IMR-90 (cell line): ENCODE measurements at regions of chr1 and their contacts with region 1.

Region 1: DNA sequence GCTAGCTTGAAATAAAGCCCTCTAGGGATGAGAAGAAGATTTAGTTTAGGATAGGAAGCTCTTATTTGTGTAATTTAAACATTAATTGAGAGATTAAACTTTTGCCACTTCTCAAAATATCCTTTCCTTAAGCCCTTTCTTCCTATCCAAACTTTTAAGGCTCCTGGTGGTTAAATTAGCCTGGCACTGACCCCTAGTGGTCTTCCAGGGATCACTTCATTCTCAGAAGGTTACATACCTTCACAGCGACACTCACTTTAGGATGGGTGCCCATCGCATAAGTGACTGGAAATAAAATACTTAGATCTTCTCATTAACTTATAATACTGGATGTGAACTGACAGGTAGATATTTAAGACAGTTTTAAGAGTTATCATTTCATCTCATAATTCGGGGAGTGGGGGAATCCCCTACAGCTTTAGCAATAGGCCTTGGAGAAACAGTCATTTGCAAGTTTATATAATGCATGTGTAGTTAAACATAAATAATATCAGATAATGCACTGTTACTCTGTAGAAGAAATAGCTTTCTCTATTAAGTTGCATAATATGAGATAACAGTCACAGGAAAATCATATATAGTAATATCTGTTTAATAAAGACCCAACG is 7.4 kb downstream of the LHX9 start:
- DNase-seq: peak; percentile 61
- ATAC-seq: peak; percentile 83
- H3K4me3 ChIP-seq: no peak overlapping the region
- H3K27ac ChIP-seq: no peak overlapping the region
- H3K4me1 ChIP-seq: no peaks in the 10 kb centered on the region
- H3K27me3 ChIP-seq: peaks cover 55% of the 10 kb centered on the region
- CTCF ChIP-seq: peak; percentile 76
- POLR2A ChIP-seq: no peak
- RAD21 ChIP-seq: peak; percentile 78

Region 2: GRCh38 chr1:197521118-197521739 is 403.4 kb before region 1 on chr1:
- CTCF ChIA-PET with region 1: interaction called, 4 read pairs
- POLR2A ChIA-PET with region 1: no interaction called
- dilution Hi-C with region 1: no loop called
- in situ Hi-C with region 1: loop called (anchors 5 kb)
- intact Hi-C with region 1: loop called (anchors 5 kb)
- DNase-seq: peak; percentile 44
- ATAC-seq: peak; percentile 66
- H3K4me3 ChIP-seq: no peak overlapping the region
- H3K27ac ChIP-seq: no peak overlapping the region
- H3K4me1 ChIP-seq: no peaks in the 10 kb centered on the region
- H3K27me3 ChIP-seq: no peaks in the 10 kb centered on the region
- CTCF ChIP-seq: peak; percentile 60
- POLR2A ChIP-seq: no peak
- RAD21 ChIP-seq: peak; percentile 43

Region 3: GRCh38 chr1:197614916-197615692 is 309.5 kb before region 1 on chr1:
- CTCF ChIA-PET with region 1: interaction called, 3 read pairs
- POLR2A ChIA-PET with region 1: no interaction called
- dilution Hi-C with region 1: no loop called
- in situ Hi-C with region 1: loop called (anchors 5 kb)
- intact Hi-C with region 1: loop called (anchors 2 kb)
- DNase-seq: peak; percentile 51
- ATAC-seq: peak; percentile 91
- H3K4me3 ChIP-seq: no peak overlapping the region
- H3K27ac ChIP-seq: no peak overlapping the region
- H3K4me1 ChIP-seq: 0 out of 2 replicates have a peak, but pooled peaks cover 2% of the 10 kb centered on the region
- H3K27me3 ChIP-seq: no peaks in the 10 kb centered on the region
- CTCF ChIP-seq: peak; percentile 66
- POLR2A ChIP-seq: no peak
- RAD21 ChIP-seq: peak; percentile 78

Region 4: GRCh38 chr1:197807216-197807615 is 117.4 kb before region 1 on chr1:
- CTCF ChIA-PET with region 1: no interaction called
- POLR2A ChIA-PET with region 1: no interaction called
- dilution Hi-C with region 1: no loop called
- in situ Hi-C with region 1: no loop called
- intact Hi-C with region 1: no loop called
- DNase-seq: no peak
- ATAC-seq: no peak
- H3K4me3 ChIP-seq: no peak overlapping the region
- H3K27ac ChIP-seq: no peak overlapping the region
- H3K4me1 ChIP-seq: peaks cover 4% of the 10 kb centered on the region
- H3K27me3 ChIP-seq: no peaks in the 10 kb centered on the region
- CTCF ChIP-seq: no peak
- POLR2A ChIP-seq: no peak
- RAD21 ChIP-seq: no peak